ENCODE measurements at regions of chr1 and their contacts with region 1.

Region 1: GRCh38 chr1:117758444-117759316 is 152.8 kb downstream of the TENT5C start:
- DNase-seq: peak; percentile 67 to 71
- ATAC-seq: peak; percentile 94 to 99
- H3K4me3 ChIP-seq: peak overlapping the region; percentile 47
- H3K27ac ChIP-seq: peak overlapping the region in 1 of 2 experiments; percentile 70; a peak in 4 of 6 replicates
- H3K4me1 ChIP-seq: no peaks in the 10 kb centered on the region
- CTCF ChIP-seq: peak; percentile 71
- EP300 ChIP-seq: no peak
- POLR2A ChIP-seq: no peak
- RAD21 ChIP-seq: peak; percentile 57 to 64; a peak in 4 of 5 replicates

Region 2: DNA sequence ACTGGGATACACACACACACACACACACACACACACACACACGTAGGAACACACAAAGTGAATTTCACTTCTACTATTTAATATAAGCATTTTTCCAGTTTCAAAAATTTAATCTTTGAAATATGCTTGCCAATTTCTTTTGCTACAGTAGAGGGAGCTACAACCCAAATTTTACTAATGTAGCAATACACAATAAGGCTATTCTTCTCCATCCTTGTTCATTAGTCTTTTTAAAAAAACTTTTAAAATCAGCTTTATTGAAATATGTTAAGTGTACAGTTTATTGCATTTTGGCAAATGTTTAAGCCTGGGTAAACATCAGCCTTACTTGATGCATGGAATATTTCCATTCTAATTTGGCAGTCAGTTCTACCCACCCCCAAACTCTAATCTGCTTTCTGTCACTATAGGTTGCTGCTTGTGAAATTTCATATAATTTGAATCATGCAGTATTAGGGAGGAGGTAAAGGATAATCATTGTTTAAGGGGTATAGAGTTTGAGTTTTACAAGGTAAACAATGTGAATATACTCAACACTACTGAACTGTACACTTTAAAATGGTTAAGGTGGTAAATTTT is 245.8 kb before region 1 on chr1:
- CTCF ChIA-PET with region 1: interaction called, 34 read pairs
- POLR2A ChIA-PET with region 1: no interaction called
- DNase-seq: peak in 1 of 2 experiments; percentile 1
- ATAC-seq: no peak
- H3K4me3 ChIP-seq: no peak overlapping the region
- H3K27ac ChIP-seq: no peak overlapping the region
- H3K4me1 ChIP-seq: no peaks in the 10 kb centered on the region
- CTCF ChIP-seq: peak; percentile 63
- EP300 ChIP-seq: no peak
- POLR2A ChIP-seq: no peak
- RAD21 ChIP-seq: peak; percentile 67 to 76

Region 3: DNA sequence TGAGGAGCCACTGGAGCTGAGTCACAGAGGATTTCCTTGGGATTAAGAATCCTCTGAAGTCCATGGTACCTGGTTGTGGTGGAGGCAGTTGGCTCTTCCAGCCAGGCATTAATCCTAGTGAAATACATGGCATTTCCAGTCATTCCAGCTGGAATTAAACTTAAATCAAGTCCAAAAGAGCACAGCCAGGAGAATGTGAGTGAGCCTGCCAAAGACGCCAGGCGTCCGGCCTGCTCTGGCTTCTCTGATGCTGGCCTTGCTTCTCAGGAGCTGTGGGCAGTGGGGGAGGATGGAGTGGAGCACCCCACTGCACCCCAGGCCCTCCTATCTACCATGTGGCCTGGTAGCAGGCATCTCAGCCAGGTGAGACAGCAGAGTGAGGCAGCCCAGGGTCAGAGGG is 176.2 kb before region 1 on chr1:
- CTCF ChIA-PET with region 1: interaction called, 13 read pairs
- POLR2A ChIA-PET with region 1: no interaction called
- DNase-seq: no peak
- ATAC-seq: no peak
- H3K4me3 ChIP-seq: no peak overlapping the region
- H3K27ac ChIP-seq: no peak overlapping the region
- H3K4me1 ChIP-seq: no peaks in the 10 kb centered on the region
- CTCF ChIP-seq: no peak
- EP300 ChIP-seq: no peak
- POLR2A ChIP-seq: no peak
- RAD21 ChIP-seq: no peak

Region 4: GRCh38 chr1:117740496-117740895 is 18.2 kb before region 1 on chr1:
- CTCF ChIA-PET with region 1: interaction called, 26 read pairs
- POLR2A ChIA-PET with region 1: no interaction called
- DNase-seq: no peak
- ATAC-seq: no peak; a peak in 1 of 6 replicates
- H3K4me3 ChIP-seq: no peak overlapping the region
- H3K27ac ChIP-seq: no peak overlapping the region
- H3K4me1 ChIP-seq: no peaks in the 10 kb centered on the region
- CTCF ChIP-seq: no peak
- EP300 ChIP-seq: no peak
- POLR2A ChIP-seq: no peak
- RAD21 ChIP-seq: no peak

Region 5: DNA sequence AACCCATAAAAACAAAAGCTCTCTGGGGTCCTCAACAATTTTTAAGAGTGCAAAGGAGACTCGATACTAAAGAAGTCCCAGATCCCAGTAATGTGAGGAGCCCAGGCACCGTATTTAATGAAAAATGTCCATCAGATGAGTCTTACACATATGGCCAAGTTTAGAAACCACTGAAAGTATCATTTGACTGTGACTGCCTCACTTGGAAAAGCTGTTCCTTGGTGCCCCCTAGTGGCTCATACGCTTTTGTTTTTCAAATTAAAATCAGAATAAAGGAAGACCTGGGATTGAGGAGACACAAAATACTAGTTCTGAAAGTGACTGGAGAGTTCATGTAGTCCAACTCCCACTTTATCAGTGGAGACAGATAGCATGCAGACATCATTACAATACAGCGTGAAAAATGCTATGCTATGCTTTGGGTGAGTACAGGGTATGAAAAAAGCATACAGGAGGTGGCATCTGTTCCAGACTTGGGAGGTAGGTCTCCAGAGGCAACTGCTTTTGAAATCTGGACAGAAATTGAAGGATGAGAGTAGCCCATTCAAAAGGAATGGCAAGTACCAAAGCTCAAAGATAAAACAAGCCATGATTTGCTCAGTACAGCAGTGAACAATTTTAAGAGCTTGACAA is 136.9 kb after region 1 on chr1:
- CTCF ChIA-PET with region 1: interaction called, 15 read pairs
- POLR2A ChIA-PET with region 1: interaction called, 4 read pairs
- DNase-seq: peak; percentile 15 to 64
- ATAC-seq: peak; percentile 30 to 56; a peak in 3 of 6 replicates
- H3K4me3 ChIP-seq: no peak overlapping the region
- H3K27ac ChIP-seq: no peak overlapping the region
- H3K4me1 ChIP-seq: no peaks in the 10 kb centered on the region
- CTCF ChIP-seq: peak; percentile 71
- EP300 ChIP-seq: no peak
- POLR2A ChIP-seq: no peak
- RAD21 ChIP-seq: peak; percentile 68 to 76

Measured in A549 (cell line).